ENCODE measurements at regions of chr11 and their contacts with region 1.

Region 1: GRCh38 chr11:129853518-129854236 is 38.0 kb downstream of the TMEM45B start:
- DNase-seq: peak; percentile 51 to 90 (median 74)
- ATAC-seq: peak; percentile 94
- H3K4me3 ChIP-seq: no peak overlapping the region
- H3K4me3 Mint-ChIP-seq: peak overlapping the region; percentile 71
- H3K27ac ChIP-seq: peak overlapping the region in 1 of 2 experiments; percentile 44
- H3K27ac Mint-ChIP-seq: peak overlapping the region; percentile 91
- H3K4me1 ChIP-seq: peaks cover 26% of the 10 kb centered on the region
- H3K4me1 Mint-ChIP-seq: peaks cover 40% of the 10 kb centered on the region
- H3K27me3 ChIP-seq: no peaks in the 10 kb centered on the region
- H3K27me3 Mint-ChIP-seq: no peaks in the 10 kb centered on the region
- CTCF ChIP-seq: no peak

Region 2: GRCh38 chr11:129814244-129814993 is 39.3 kb before region 1 on chr11:
- CTCF ChIA-PET with region 1: interaction called, 3 read pairs
- POLR2A ChIA-PET with region 1: interaction called, 14 read pairs
- intact Hi-C with region 1: loop called (anchors 5 kb)
- DNase-seq: peak; percentile 41 to 75 (median 67)
- ATAC-seq: peak; percentile 72
- H3K4me3 ChIP-seq: peak overlapping the region; percentile 12 to 19
- H3K4me3 Mint-ChIP-seq: peak overlapping the region; percentile 78
- H3K27ac ChIP-seq: peak overlapping the region; percentile 16 to 30
- H3K27ac Mint-ChIP-seq: peak overlapping the region; percentile 82
- H3K4me1 ChIP-seq: peaks cover 14% of the 10 kb centered on the region
- H3K4me1 Mint-ChIP-seq: peaks cover 30% of the 10 kb centered on the region
- H3K27me3 ChIP-seq: peaks cover 0 to 10% of the 10 kb centered on the region in 2 experiments
- H3K27me3 Mint-ChIP-seq: peaks cover 28% of the 10 kb centered on the region
- CTCF ChIP-seq: no peak

Region 3: DNA sequence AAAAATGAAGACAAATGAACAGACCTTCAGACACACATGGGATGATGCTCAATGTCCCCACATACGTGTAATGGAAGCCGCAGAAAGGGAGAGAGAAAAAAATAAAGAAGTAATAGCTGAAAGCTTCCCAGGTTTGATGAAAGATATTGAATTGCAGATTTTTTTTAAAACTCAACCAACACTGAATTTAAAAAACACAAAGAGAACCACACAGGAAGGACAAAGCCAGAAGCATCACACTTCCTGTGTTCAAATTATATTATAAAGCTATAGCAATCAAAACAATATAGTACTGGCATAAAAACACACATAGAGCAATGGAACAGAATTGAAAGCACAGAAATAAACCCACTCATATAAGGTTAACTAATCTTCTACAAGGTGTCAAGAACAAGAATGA is 11.5 kb before region 1 on chr11:
- CTCF ChIA-PET with region 1: interaction called, 3 read pairs
- POLR2A ChIA-PET with region 1: interaction called, 18 read pairs
- intact Hi-C with region 1: no loop called
- DNase-seq: no peak
- ATAC-seq: no peak
- H3K4me3 ChIP-seq: no peak overlapping the region
- H3K4me3 Mint-ChIP-seq: no peak overlapping the region
- H3K27ac ChIP-seq: no peak overlapping the region
- H3K27ac Mint-ChIP-seq: peak overlapping the region; percentile 15
- H3K4me1 ChIP-seq: peaks cover 8% of the 10 kb centered on the region
- H3K4me1 Mint-ChIP-seq: peaks cover 28% of the 10 kb centered on the region
- H3K27me3 ChIP-seq: no peaks in the 10 kb centered on the region
- H3K27me3 Mint-ChIP-seq: no peaks in the 10 kb centered on the region
- CTCF ChIP-seq: no peak

Region 4: GRCh38 chr11:130029137-130029536 is 175.5 kb after region 1 on chr11:
- CTCF ChIA-PET with region 1: no interaction called
- POLR2A ChIA-PET with region 1: no interaction called
- intact Hi-C with region 1: no loop called
- DNase-seq: no peak
- ATAC-seq: no peak
- H3K4me3 ChIP-seq: no peak overlapping the region
- H3K4me3 Mint-ChIP-seq: no peak overlapping the region
- H3K27ac ChIP-seq: no peak overlapping the region
- H3K27ac Mint-ChIP-seq: no peak overlapping the region
- H3K4me1 ChIP-seq: no peaks in the 10 kb centered on the region
- H3K4me1 Mint-ChIP-seq: no peaks in the 10 kb centered on the region
- H3K27me3 ChIP-seq: peaks cover 0 to 2% of the 10 kb centered on the region in 2 experiments
- H3K27me3 Mint-ChIP-seq: peaks cover 2% of the 10 kb centered on the region
- CTCF ChIP-seq: no peak

Region 5: GRCh38 chr11:130042093-130042591 is 188.5 kb after region 1 on chr11:
- CTCF ChIA-PET with region 1: no interaction called
- POLR2A ChIA-PET with region 1: no interaction called
- intact Hi-C with region 1: no loop called
- DNase-seq: peak in 1 of 9 experiments; percentile 26
- ATAC-seq: no peak
- H3K4me3 ChIP-seq: no peak overlapping the region
- H3K4me3 Mint-ChIP-seq: no peak overlapping the region
- H3K27ac ChIP-seq: no peak overlapping the region
- H3K27ac Mint-ChIP-seq: no peak overlapping the region
- H3K4me1 ChIP-seq: no peaks in the 10 kb centered on the region
- H3K4me1 Mint-ChIP-seq: no peaks in the 10 kb centered on the region
- H3K27me3 ChIP-seq: no peaks in the 10 kb centered on the region
- H3K27me3 Mint-ChIP-seq: peaks cover 12% of the 10 kb centered on the region
- CTCF ChIP-seq: no peak

Measured in CD8-positive, alpha-beta T cell (primary cell).